OCI-LY7 (cell line): ENCODE measurements at regions of chr4 and their contacts with region 1.

Region 1: DNA sequence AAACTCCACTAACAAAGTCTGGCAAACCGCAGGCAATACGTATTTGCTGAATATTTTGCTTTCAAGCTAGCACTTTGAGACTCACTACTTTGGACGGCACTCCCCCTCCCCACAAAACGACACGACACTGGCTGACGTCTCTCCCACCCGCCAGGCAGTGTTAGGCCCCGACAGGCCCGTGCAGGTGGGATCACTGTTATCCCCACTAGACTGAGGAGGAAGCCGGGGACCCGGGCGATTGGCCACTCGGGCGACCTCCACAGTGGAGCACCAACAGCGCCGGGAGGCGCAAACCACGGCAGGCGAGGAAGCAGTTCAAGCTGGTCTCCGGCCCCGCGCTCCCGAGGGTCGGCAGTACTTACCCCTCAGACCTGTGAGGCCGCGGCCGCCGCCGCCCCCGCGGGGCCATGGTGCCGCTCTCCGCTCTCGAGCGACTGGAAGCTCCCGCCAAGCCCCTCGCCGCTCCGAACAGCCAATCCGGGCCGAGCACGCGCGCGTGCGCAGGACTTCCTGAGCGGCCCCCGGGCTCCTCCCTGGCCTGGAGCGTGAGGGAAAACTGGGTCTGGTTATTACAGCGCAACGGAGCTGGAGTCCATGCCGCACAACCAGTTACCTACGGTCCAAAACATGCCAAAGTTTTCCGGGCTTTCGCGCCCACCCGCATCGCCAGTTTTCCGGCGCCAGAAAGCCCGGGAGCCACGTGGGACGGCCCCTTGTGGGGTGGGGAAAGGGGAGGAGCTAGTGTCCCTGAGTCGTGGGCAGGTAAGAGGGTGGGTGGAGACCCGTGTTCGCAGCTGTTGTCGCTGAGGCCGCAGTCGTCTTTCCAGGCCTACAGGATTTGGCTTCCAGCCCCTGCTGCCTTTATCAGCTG is at the start of gene CENPU:
- DNase-seq: peak; percentile 99
- H3K4me3 ChIP-seq: peak within 1 kb of the TSS; percentile 94
- H3K27ac ChIP-seq: peak within 1 kb of the TSS; percentile 84
- H3K4me1 ChIP-seq: peaks cover 30% of the 10 kb centered on the region
- CTCF ChIP-seq: no peak
- total RNA-seq, gene CENPU: 83.9 and 85.1 TPM in 2 replicates

Region 2: GRCh38 chr4:183504064-183504929 is 1229.6 kb before region 1 on chr4:
- CTCF ChIA-PET with region 1: no interaction called
- POLR2A ChIA-PET with region 1: no interaction called
- intact Hi-C with region 1: loop called (anchors 5 kb)
- DNase-seq: peak; percentile 98
- H3K4me3 ChIP-seq: peak overlapping the region; percentile 100
- H3K27ac ChIP-seq: peak overlapping the region; percentile 89
- H3K4me1 ChIP-seq: peaks cover 23% of the 10 kb centered on the region
- CTCF ChIP-seq: no peak

Region 3: DNA sequence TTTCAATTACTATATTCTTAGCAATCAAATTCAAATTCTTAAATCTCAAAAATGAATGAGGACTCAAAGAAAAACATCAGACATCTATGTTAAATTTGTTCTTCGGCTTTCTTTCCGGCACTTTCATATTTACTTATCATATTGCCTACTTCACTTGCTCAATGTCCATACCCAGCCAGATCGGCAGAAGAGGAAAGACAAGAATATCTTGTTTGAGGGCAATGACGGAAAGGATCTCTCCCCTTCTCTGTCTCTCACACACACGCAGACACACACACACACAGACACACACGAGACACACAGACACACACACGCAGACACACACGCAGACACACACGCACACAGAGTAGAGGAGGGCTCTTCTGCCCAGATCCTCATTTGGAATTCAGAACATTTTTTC is 246.4 kb before region 1 on chr4:
- CTCF ChIA-PET with region 1: no interaction called
- POLR2A ChIA-PET with region 1: no interaction called
- intact Hi-C with region 1: no loop called
- DNase-seq: no peak
- H3K4me3 ChIP-seq: no peak overlapping the region
- H3K27ac ChIP-seq: no peak overlapping the region
- H3K4me1 ChIP-seq: no peaks in the 10 kb centered on the region
- CTCF ChIP-seq: no peak

Region 4: DNA sequence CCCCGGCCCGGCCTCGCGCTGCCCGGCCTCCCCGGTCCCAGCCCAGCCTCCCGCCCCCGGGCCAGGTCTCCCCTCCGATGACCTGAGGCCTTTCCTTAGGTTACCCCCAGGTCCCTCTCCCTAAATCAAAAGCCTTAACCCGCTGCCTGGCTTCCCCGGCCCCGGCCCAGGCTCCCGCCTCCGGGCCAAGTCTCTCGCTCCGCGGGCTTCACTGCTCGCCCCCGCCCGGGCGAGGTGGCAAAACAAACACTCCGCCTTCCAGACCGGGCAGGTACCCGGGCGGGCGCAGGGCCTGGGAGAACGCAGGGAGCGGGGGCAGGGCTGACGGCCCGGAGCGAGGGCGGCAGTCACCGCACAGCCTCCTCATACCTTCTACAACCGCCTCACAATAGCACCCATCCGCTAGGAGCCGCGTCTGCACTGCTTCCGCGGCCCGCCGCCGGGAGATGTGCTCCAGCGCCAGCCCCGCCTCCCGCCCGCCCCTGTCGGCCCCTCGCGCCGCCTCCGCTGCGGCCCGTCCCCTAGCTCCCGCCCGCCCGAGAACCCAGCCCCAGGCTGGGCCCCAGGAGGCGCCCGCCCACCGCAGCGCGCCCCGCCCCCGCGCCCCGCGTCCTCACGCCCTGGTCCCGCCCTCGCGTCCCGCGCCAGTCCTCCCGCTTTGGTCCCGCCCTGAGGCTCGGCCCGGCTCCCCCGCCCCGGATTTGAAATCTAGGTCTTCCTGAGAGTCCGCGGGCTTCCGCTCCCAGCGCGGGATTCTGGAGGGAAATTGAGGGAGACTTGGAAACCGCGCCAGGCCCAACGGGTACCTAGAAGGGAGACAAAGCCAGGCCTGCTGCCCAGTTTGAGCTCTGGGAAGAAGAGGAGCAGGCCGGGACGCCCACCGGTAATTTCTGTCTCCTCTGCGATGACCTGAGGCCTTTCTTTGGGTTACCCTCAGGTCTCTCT is 84.6 kb before region 1 on chr4 and contains the starts of genes CASP3 and PRIMPOL:
- CTCF ChIA-PET with region 1: no interaction called
- POLR2A ChIA-PET with region 1: interaction called, 18 read pairs
- intact Hi-C with region 1: loop called (anchors 1 kb)
- DNase-seq: peak; percentile 96
- H3K4me3 ChIP-seq: peak within 1 kb of the TSS; percentile 93
- H3K27ac ChIP-seq: peak within 1 kb of the TSS; percentile 79
- H3K4me1 ChIP-seq: peaks cover 42% of the 10 kb centered on the region
- CTCF ChIP-seq: 0 out of 2 replicates have a peak, but pooled peaks have one; percentile 21
- total RNA-seq, gene CASP3: 25.8 and 29.5 TPM in 2 replicates
- total RNA-seq, gene PRIMPOL: 8.8 and 9.2 TPM in 2 replicates

Region 5: GRCh38 chr4:184722798-184723197 is 11.1 kb before region 1 on chr4:
- CTCF ChIA-PET with region 1: no interaction called
- POLR2A ChIA-PET with region 1: interaction called, 12 read pairs
- intact Hi-C with region 1: no loop called
- DNase-seq: no peak
- H3K4me3 ChIP-seq: no peak overlapping the region
- H3K27ac ChIP-seq: no peak overlapping the region
- H3K4me1 ChIP-seq: peaks cover 13% of the 10 kb centered on the region
- CTCF ChIP-seq: peak; percentile 62

Region 6: DNA sequence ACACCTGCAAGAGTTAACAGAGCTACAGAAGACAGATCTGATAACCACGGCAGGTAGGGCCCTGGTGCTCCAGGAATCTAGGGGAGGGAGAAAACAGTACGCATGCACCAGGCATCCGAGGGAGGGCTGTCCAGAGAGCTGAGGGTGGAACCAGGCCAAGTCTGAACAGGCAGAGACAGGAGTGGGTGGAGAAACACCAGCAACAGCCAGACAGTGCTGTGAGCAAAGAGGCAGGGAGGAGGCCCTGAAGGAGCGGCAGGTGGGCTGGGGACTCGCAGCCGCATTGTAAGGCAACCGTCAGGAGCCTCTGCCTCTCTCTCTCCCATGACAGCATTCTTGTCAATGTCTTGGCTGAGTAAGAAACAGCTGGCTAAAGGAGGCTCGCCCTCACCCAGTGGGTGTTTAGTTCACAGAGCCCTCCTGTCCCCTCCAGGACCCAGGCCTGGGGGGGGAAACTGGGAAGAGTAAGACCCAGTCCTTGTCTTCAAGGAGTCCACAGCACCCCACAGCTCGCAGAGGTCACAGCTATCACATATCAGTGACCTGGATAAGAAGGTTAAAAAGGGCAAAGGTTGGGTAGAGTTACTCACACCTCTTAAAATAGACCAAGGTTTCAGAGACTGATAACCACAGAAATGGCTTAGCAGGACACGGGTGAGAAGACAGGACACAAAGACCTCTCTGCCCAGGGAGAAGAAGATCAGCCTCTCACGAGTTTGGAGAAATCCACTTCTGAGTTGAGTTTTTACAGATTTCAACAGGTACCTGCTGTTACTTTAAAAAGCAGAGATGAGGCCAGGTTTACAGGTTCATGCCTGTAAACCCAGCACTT is 81.4 kb after region 1 on chr4:
- CTCF ChIA-PET with region 1: no interaction called
- POLR2A ChIA-PET with region 1: interaction called, 10 read pairs
- intact Hi-C with region 1: no loop called
- DNase-seq: peak; percentile 76
- H3K4me3 ChIP-seq: peak overlapping the region; percentile 49
- H3K27ac ChIP-seq: peak overlapping the region; percentile 84
- H3K4me1 ChIP-seq: peaks cover 68% of the 10 kb centered on the region
- CTCF ChIP-seq: no peak

Region 7: GRCh38 chr4:184825896-184826690 is 92.2 kb after region 1 on chr4 and contains the start of gene ACSL1:
- CTCF ChIA-PET with region 1: no interaction called
- POLR2A ChIA-PET with region 1: interaction called, 5 read pairs
- intact Hi-C with region 1: loop called (anchors 1 kb)
- DNase-seq: peak; percentile 85
- H3K4me3 ChIP-seq: peak within 1 kb of the TSS; percentile 96
- H3K27ac ChIP-seq: peak within 1 kb of the TSS; percentile 22
- H3K4me1 ChIP-seq: peaks cover 39% of the 10 kb centered on the region
- CTCF ChIP-seq: no peak
- total RNA-seq, gene ACSL1: 20.8 and 24.3 TPM in 2 replicates

Region 8: GRCh38 chr4:186191200-186192065 is 1457.5 kb after region 1 on chr4 and contains the start of gene CYP4V2:
- CTCF ChIA-PET with region 1: no interaction called
- POLR2A ChIA-PET with region 1: no interaction called
- intact Hi-C with region 1: loop called (anchors 10 kb)
- DNase-seq: peak; percentile 92
- H3K4me3 ChIP-seq: peak within 1 kb of the TSS; percentile 82
- H3K27ac ChIP-seq: peak within 1 kb of the TSS; percentile 91
- H3K4me1 ChIP-seq: peaks cover 27% of the 10 kb centered on the region
- CTCF ChIP-seq: peak; percentile 61
- total RNA-seq, gene CYP4V2: 6.2 and 6.9 TPM in 2 replicates